Gastrocnemius medialis (tissue), 4 donors: ENCODE measurements at regions of chr9 and their contacts with region 1.

Region 1: GRCh38 chr9:792282-793260 is 48.9 kb upstream of the DMRT1 start:
- DNase-seq: no peak
- ATAC-seq: no peak
- H3K4me3 ChIP-seq: no peak overlapping the region
- H3K27ac ChIP-seq: no peak overlapping the region
- H3K4me1 ChIP-seq: no peaks in the 10 kb centered on the region
- H3K27me3 ChIP-seq: no peaks in the 10 kb centered on the region
- CTCF ChIP-seq: no peak
- POLR2A ChIP-seq: no peak

Region 2: GRCh38 chr9:893843-894420 is 101.4 kb after region 1 on chr9:
- in situ Hi-C with region 1: loop called in 1 of 4 experiments (anchors 25 kb)
- intact Hi-C with region 1: no loop called
- DNase-seq: peak; percentile 10 to 14
- ATAC-seq: peak; percentile 66 to 74
- H3K4me3 ChIP-seq: peak overlapping the region in 1 of 4 donors; percentile 22
- H3K27ac ChIP-seq: no peak overlapping the region
- H3K4me1 ChIP-seq: no peaks in the 10 kb centered on the region
- H3K27me3 ChIP-seq: peaks cover 0 to 4% (median 0%) of the 10 kb centered on the region in 3 donors
- CTCF ChIP-seq: peak; percentile 30 to 74 (median 61)
- POLR2A ChIP-seq: no peak